ENCODE measurements at regions of chr19 and their contacts with region 1.

Region 1: GRCh38 chr19:39390755-39391592 is at the starts of genes MED29 and PAF1:
- DNase-seq: peak; percentile 99
- H3K4me3 ChIP-seq: peak within 1 kb of the TSS; percentile 99
- H3K27ac ChIP-seq: peak within 1 kb of the TSS; percentile 94
- H3K27me3 ChIP-seq: no peaks in the 10 kb centered on the region
- CTCF ChIP-seq: no peak
- polyA plus RNA-seq, gene MED29: 28.0 and 29.9 TPM in 2 replicates
- polyA plus RNA-seq, gene PAF1: 51.9 and 60.5 TPM in 2 replicates

Region 2: GRCh38 chr19:39372047-39372802 is 18.7 kb before region 1 on chr19:
- CTCF ChIA-PET with region 1: interaction called, 3 read pairs
- POLR2A ChIA-PET with region 1: interaction called, 11 read pairs
- DNase-seq: peak; percentile 79
- H3K4me3 ChIP-seq: no peak overlapping the region
- H3K27ac ChIP-seq: peak overlapping the region; percentile 99
- H3K27me3 ChIP-seq: no peaks in the 10 kb centered on the region
- CTCF ChIP-seq: no peak

Region 3: GRCh38 chr19:39406656-39407393 is 15.9 kb after region 1 on chr19 and contains the start of gene ZFP36:
- CTCF ChIA-PET with region 1: interaction called, 67 read pairs
- POLR2A ChIA-PET with region 1: interaction called, 27 read pairs
- DNase-seq: peak; percentile 60
- H3K4me3 ChIP-seq: peak within 1 kb of the TSS; percentile 93
- H3K27ac ChIP-seq: peak within 1 kb of the TSS; percentile 81
- H3K27me3 ChIP-seq: no peaks in the 10 kb centered on the region
- CTCF ChIP-seq: no peak
- polyA plus RNA-seq, gene ZFP36: 4.1 and 8.3 TPM in 2 replicates

Region 4: DNA sequence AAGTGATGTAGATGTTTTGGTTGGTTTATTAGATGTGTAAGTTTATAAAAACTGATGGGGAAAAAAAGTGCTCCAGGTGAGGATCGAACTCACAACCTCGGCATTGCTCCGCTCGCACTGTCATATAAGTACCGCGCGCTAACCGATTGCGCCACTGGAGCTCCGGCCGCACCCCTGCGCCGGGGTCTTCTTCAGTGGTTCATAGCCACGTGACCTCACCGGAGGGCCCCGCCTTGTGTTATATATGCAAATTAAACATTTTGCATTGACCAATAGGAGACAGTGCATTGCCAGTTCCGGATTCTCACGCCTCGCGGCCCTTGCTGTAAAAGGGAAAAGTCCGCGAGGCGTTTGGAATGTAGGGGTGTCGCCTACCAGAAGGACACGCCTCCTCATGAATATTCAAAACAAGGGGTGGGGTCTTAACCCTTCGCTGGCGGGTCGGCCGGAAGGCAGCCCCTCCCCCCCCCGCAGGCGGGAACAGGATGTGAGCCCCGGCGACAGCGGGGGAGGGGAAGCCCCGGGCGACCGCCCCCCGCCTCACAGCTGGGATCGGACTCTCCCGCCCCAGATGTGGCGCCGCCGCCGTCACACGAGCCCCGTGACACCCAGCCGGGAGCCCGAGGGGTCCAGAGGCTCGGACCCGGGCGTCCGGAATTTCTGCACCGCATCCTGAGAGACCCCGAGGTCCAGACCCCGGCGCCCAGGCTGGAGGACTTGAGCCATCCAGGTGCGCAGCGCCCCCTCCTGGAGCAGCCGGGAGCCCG is 21.3 kb after region 1 on chr19 and contains the start of gene PLEKHG2:
- CTCF ChIA-PET with region 1: interaction called, 67 read pairs
- POLR2A ChIA-PET with region 1: interaction called, 27 read pairs
- DNase-seq: peak; percentile 100
- H3K4me3 ChIP-seq: peak within 1 kb of the TSS; percentile 84
- H3K27ac ChIP-seq: peak within 1 kb of the TSS; percentile 92
- H3K27me3 ChIP-seq: no peaks in the 10 kb centered on the region
- CTCF ChIP-seq: peak; percentile 75
- polyA plus RNA-seq, gene PLEKHG2: 12.3 and 19.1 TPM in 2 replicates

Measured in AG04450 (cell line).